CD4-positive, alpha-beta memory T cell (primary cell): ENCODE measurements at regions of chr6 and their contacts with region 1.

Region 1: GRCh38 chr6:70520575-70520974 is 46.2 kb upstream of the SDHAF4 start:
- DNase-seq: peak; percentile 12 to 41 (median 28)
- H3K4me3 ChIP-seq: no peak overlapping the region
- H3K4me3 Mint-ChIP-seq: no peak overlapping the region
- H3K27ac ChIP-seq: no peak overlapping the region
- H3K27ac Mint-ChIP-seq: no peak overlapping the region
- H3K4me1 ChIP-seq: no peaks in the 10 kb centered on the region
- H3K4me1 Mint-ChIP-seq: peaks cover 0 to 7% (median 6%) of the 10 kb centered on the region in 4 donors
- H3K27me3 ChIP-seq: no peaks in the 10 kb centered on the region
- H3K27me3 Mint-ChIP-seq: no peaks in the 10 kb centered on the region

Region 2: DNA sequence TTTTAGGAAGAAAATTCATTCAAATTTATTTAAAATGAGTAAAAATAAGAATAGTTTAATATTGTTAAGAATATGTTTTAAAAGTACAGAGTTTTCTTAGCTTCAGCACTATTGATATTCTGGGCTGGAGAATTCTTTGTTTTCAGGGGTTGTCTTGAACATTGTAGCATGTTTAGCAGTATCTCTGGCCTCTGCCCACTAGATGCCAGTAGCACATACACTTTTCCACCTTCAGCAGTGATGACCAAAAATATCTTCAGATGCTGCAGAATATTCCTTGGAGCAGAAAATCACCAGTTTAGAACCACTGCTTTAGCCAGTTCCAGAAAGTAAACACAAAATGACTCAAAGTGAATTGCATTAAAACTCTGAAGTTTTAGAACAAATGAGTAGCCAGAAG is 26.7 kb after region 1 on chr6:
- CTCF ChIA-PET with region 1: interaction called, 11 read pairs
- POLR2A ChIA-PET with region 1: no interaction called
- intact Hi-C with region 1: no loop called
- DNase-seq: peak in 2 of 5 donors; percentile 4 to 22
- H3K4me3 ChIP-seq: no peak overlapping the region
- H3K4me3 Mint-ChIP-seq: no peak overlapping the region
- H3K27ac ChIP-seq: no peak overlapping the region
- H3K27ac Mint-ChIP-seq: no peak overlapping the region
- H3K4me1 ChIP-seq: no peaks in the 10 kb centered on the region
- H3K4me1 Mint-ChIP-seq: no peaks in the 10 kb centered on the region
- H3K27me3 ChIP-seq: no peaks in the 10 kb centered on the region
- H3K27me3 Mint-ChIP-seq: no peaks in the 10 kb centered on the region